WTC11 (cell line): ENCODE measurements at regions of chr11 and their contacts with region 1.

Region 1: DNA sequence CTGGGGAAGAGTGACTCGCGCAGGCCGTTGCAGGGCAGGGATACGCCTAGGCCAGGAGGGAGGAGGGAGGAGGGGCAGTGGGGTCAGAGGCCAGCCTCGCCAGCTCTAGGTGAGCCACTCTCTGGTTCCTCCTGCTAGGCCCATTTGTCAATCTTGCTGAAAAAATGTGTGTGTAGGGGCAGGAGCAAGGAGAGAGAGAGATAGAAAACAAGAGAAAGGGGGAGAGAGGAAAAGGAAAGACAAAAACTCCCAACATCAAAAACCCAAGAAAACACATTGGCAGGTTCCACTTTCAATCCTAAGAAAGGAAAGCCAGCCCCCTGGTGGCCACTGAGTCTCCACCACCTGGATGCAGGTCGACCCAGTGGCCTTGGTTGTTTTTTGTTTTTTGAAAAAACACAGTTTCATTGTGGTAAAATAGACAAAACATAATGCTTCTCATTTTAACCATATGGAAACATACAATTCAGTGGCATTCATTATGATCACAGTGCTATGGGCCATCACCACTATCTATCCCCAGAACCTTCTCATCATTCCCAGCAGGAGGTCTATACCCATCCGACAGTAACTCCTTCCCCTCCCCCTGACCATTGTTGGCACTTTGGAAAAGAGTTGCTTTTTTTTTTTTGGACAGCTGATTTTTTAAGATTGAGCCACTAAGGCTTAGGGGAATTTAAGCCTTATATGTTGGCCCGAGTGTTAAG is 10.9 kb downstream of the OMP start:
- DNase-seq: peak; percentile 60
- ATAC-seq: peak; percentile 65
- H3K4me3 Mint-ChIP-seq: no peak overlapping the region
- H3K27ac Mint-ChIP-seq: peak overlapping the region; percentile 64
- H3K4me1 Mint-ChIP-seq: peaks cover 12% of the 10 kb centered on the region
- H3K27me3 Mint-ChIP-seq: no peaks in the 10 kb centered on the region
- CTCF ChIP-seq: peak; percentile 45

Region 2: DNA sequence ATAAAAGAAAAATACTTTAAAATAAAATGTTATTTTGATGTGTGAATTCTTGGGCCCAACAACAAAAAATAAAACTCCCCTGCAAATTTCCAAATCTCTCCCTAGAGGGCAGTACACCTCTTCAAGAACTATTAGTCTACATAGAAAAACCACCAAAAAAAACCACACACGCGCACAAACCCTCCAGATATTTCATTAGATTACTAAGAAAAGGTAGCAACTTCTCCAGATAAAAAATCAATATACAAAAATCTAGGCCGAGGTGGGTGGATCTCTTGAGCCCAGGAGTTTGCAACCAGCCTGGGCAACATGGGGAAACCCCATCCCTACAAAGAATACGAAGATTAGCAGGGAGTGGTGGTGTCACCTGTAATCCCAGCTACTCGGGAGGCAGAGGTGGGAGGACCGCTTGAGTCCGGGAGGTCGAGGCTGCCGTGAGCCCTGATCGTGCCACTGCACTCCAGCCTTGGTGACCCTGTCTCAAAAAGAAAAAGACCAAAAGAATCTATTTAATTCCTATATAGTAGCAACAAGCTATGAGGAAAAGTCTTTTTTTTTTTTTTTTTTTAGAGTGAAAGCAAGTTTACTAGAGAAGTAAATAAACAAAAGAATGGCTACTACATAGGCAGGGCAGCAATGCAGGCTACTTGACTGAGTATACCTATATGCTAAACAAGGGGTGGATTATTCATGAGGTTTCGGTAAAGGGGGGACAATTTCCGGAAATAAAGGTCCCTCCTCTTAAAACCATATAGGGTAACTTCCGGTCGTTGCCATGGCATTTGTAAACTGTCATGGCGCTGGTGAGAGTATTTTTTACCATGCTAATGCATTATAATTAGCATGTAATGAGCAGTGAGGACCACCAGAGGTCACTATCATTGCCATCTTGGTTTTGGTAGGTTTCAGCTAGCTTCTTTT is 66.3 kb before region 1 on chr11:
- CTCF ChIA-PET with region 1: interaction called, 25 read pairs
- POLR2A ChIA-PET with region 1: no interaction called
- DNase-seq: peak; percentile 61
- ATAC-seq: peak; percentile 80
- H3K4me3 Mint-ChIP-seq: peak overlapping the region; percentile 51
- H3K27ac Mint-ChIP-seq: peak overlapping the region; percentile 52
- H3K4me1 Mint-ChIP-seq: peaks cover 14% of the 10 kb centered on the region
- H3K27me3 Mint-ChIP-seq: peaks cover 16% of the 10 kb centered on the region
- CTCF ChIP-seq: no peak

Region 3: DNA sequence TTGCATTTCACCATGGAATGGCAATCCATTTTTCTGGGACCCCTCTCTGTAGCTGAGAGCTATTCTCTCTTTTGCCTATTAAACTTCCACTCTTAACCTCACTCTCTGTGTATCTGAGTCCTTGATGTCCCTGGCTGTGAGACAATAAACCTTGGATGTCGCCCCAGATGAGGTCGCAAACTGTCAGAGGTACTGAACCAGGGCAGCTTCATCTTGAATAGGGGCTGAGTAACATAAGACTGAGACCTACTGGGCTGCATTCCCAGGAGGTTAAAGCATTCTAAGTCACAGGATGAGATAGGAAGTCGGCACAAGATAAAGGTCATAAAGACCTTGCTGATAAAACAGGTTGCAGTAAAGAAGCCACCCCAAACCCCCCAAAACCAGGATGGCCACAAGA is 639.0 kb after region 1 on chr11:
- CTCF ChIA-PET with region 1: no interaction called
- POLR2A ChIA-PET with region 1: no interaction called
- DNase-seq: no peak
- ATAC-seq: peak; percentile 52
- H3K4me3 Mint-ChIP-seq: peak overlapping the region; percentile 48
- H3K27ac Mint-ChIP-seq: peak overlapping the region; percentile 95
- H3K4me1 Mint-ChIP-seq: peaks cover 72% of the 10 kb centered on the region
- H3K27me3 Mint-ChIP-seq: no peaks in the 10 kb centered on the region
- CTCF ChIP-seq: no peak